GM12878 (cell line): ENCODE measurements at regions of chr5 and their contacts with region 1.

Region 1: GRCh38 chr5:128201065-128201926 is 117.7 kb downstream of the SLC12A2 start:
- DNase-seq: no peak
- ATAC-seq: peak; percentile 97
- H3K4me3 ChIP-seq: no peak overlapping the region
- H3K27ac ChIP-seq: no peak overlapping the region
- H3K4me1 ChIP-seq: peaks cover 4% of the 10 kb centered on the region; the same call in 1 of the 2 replicates
- H3K27me3 ChIP-seq: no peaks in the 10 kb centered on the region
- CTCF ChIP-seq: peak; percentile 81 to 90 (median 86)
- EP300 ChIP-seq: no peak
- POLR2A ChIP-seq: no peak
- RAD21 ChIP-seq: peak; percentile 97

Region 2: GRCh38 chr5:127746756-127747155 is 454.5 kb before region 1 on chr5:
- CTCF ChIA-PET with region 1: no interaction called
- POLR2A ChIA-PET with region 1: no interaction called
- RAD21 ChIA-PET with region 1: no interaction called
- SMC1A ChIA-PET with region 1: interaction called, 3 read pairs
- in situ Hi-C with region 1: no loop called
- intact Hi-C with region 1: loop called (anchors 1 kb)
- DNase-seq: no peak
- ATAC-seq: peak; percentile 64
- H3K4me3 ChIP-seq: no peak overlapping the region
- H3K27ac ChIP-seq: no peak overlapping the region
- H3K4me1 ChIP-seq: no peaks in the 10 kb centered on the region
- H3K27me3 ChIP-seq: no peaks in the 10 kb centered on the region; a peak in 1 of 4 replicates
- CTCF ChIP-seq: peak; percentile 25 to 47 (median 31); a peak in 4 of 6 replicates
- EP300 ChIP-seq: no peak
- POLR2A ChIP-seq: no peak
- RAD21 ChIP-seq: peak; percentile 65

Region 3: DNA sequence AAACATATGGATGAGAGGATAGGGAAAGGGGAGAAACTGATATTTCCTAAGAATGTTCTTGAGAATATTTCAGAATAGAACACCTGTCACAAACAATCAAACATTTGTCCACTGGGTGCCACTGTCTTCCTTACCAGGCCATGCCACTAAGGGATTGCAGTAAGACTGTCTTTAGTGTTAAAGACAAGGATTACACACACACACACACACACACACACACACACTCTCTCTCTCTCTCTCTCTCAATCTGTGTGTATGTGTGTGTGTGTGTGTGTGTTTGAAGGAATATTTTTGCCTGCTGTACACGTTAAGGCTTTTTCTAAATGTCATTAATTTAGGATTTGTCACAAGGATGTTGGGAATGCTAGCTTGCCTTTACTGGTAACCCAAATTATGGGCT is 443.7 kb before region 1 on chr5:
- CTCF ChIA-PET with region 1: interaction called, 36 read pairs
- POLR2A ChIA-PET with region 1: no interaction called
- RAD21 ChIA-PET with region 1: interaction called, 5 read pairs
- SMC1A ChIA-PET with region 1: interaction called, 16 read pairs
- in situ Hi-C with region 1: loop called (anchors 5 kb)
- intact Hi-C with region 1: loop called (anchors 1 kb)
- DNase-seq: peak; percentile 16
- ATAC-seq: peak; percentile 92
- H3K4me3 ChIP-seq: no peak overlapping the region
- H3K27ac ChIP-seq: no peak overlapping the region
- H3K4me1 ChIP-seq: no peaks in the 10 kb centered on the region
- H3K27me3 ChIP-seq: no peaks in the 10 kb centered on the region
- CTCF ChIP-seq: peak; percentile 14 to 60 (median 21); a peak in 4 of 6 replicates
- EP300 ChIP-seq: no peak
- POLR2A ChIP-seq: no peak
- RAD21 ChIP-seq: peak; percentile 65

Region 4: DNA sequence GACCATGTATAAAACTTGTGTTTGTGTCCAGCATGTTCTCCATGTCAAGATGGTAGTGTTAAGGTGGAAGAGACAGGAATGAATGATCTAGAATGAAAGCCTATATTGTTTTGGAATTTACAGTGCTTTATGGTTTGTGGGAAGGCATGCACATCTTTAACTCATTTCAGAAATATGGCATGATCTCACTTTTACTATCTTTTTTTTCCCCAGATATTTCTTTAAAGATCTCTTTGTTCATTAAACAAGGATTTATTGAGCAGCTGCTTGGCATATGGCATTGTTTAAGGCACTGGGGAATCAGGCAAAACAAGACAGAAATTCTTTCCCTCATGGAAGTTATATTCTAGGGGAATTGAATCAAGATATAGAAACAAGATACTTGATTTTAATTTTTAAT is 66.0 kb before region 1 on chr5:
- CTCF ChIA-PET with region 1: no interaction called
- POLR2A ChIA-PET with region 1: no interaction called
- RAD21 ChIA-PET with region 1: no interaction called
- SMC1A ChIA-PET with region 1: no interaction called
- in situ Hi-C with region 1: no loop called
- intact Hi-C with region 1: no loop called
- DNase-seq: no peak
- ATAC-seq: no peak
- H3K4me3 ChIP-seq: no peak overlapping the region
- H3K27ac ChIP-seq: no peak overlapping the region
- H3K4me1 ChIP-seq: no peaks in the 10 kb centered on the region
- H3K27me3 ChIP-seq: no peaks in the 10 kb centered on the region
- CTCF ChIP-seq: no peak
- EP300 ChIP-seq: no peak
- POLR2A ChIP-seq: no peak
- RAD21 ChIP-seq: no peak